Cardiac septum (tissue), 1 donor: ENCODE measurements at regions of chr12 and their contacts with region 1.

Region 1: DNA sequence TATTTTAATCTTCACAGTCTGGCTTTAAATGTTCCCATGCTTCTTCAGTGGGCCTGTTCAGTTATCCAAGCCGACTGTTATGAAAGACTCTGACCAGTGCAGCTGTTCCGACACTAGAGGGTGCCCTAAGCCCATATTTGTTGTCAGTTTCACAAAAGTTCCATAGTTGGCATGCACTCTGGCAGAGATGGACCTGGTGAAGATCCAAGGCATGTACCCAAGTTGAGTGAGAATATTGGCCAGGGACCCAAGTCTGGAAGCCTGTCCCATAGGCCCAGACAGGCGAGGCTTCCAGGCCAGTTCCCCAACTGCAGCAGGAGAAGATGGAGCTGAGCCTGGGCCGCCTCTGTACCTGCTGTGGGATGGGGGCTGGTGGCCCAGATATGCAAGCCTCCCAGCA is 27.4 kb upstream of the GUCY2C start:
- DNase-seq: no peak

Region 2: DNA sequence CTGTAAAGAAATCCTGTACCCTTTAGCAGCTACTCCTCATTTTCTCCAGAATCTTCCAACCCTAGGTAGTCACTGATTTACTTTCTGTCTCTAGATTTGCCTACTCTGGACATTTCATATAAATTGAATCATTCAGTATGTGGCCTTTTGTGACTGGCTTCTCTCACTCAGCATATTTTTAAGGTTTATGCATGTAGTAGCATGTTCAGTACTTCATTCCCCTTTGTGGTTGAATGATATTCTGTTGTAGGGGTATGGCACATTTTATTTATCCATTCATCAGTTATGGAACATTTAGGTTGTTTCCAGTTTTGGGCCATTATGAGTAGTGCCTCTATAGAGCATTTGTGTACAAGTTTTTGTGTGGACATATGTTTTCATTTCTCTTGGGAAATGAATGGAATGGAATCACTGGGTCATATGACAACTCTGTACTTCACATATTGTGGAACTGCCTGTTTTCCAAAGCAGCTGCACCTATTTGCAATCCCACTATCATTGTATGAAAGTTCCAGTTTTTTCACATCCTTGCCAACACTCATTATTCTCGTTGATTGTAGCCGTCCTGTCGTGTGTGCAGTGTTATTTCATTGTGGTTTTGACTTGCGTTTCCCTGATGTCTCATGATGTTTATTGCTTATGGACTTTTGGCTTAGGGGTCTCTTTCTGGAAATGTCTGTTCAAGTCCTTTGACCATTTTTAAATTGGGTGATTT is 301.1 kb before region 1 on chr12:
- intact Hi-C with region 1: no loop called
- DNase-seq: no peak

Region 3: DNA sequence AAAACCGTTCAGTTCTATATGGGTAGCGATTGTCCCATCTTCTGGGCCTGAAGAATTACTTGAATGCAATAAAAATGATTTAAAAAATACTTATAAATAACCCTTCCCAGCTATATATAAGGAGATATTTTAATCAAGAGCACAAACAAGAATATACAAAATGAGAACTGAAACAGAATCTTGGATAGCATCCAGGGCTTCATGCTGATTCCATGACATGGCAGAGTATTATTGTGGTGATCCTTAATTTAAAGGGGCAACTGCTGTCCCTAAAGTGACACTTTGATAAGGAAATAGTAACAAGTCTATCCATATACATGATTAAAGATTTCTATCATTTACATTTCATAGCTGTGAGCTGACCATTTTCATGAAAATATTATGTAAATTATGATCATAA is 60.7 kb after region 1 on chr12:
- intact Hi-C with region 1: no loop called
- DNase-seq: no peak

Region 4: DNA sequence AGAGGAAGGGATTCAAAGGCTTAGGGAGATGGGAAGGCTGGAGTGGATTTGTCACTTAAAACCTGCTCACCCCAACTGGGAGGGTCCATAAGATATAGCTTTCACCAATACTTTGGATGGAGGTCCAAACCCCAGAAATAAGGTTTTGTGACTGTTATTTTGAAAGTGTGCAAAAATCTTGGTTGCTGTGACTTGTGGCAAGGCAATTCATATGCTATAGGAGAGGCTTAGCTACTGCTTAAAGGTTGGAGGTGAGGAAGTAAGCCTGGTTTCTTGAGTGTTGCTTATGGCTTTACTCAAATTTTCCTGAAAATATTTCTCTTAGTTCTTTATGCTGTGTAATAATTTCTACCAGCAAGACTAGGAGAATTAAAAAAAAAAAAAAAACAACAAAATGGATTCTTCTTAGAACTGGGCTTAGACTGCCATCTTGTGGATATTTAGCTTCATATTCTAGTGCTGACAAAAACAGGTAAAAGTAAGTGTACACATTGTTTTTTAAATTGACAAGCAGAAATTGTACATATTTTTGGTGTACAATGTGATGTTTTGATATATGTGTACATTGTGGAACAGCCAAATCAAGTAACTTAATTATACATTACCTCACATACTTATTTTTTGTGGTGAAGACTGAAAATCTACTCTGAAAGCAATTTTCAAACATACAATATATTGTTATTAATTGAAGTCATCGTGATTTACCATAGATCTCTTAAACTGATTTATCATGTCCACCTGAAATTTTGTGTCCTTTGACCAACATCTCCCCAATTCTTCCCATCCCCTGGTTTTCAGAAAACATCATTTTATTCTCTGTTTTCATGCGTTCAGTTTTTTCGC is 272.0 kb after region 1 on chr12:
- intact Hi-C with region 1: loop called (anchors 5 kb)
- DNase-seq: no peak

Region 5: DNA sequence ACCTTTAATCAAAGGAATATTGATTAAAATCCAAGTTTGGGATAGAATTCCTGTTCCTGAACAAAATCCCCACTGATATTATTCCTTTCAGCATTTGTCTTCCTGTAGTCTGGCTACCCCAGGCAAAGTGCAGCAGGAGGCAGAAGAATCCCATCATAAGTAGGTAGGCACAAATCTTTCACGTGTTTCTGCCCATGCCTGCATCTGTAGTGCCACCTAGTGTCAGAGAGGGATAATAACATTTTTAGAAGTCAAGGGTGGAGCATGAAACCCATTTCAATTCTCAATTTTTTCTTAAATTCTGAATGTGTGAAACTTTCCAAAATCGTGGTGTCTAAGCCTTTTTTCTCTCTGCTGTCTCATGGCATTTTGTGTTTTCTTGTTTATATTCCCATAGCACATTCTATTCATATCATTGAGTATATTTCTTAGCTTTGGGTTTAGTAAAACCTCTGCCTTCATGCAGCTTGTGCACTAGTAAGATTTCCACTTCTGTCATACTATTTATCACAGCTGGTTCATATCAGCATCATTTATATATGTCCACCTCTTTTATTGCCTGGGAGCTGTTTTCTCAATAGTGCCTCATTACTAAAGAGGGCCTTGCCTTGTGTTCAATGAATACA is 545.3 kb after region 1 on chr12:
- intact Hi-C with region 1: loop called (anchors 5 kb)
- DNase-seq: no peak